ENCODE measurements at regions of chr9 and their contacts with region 1.

Region 1: DNA sequence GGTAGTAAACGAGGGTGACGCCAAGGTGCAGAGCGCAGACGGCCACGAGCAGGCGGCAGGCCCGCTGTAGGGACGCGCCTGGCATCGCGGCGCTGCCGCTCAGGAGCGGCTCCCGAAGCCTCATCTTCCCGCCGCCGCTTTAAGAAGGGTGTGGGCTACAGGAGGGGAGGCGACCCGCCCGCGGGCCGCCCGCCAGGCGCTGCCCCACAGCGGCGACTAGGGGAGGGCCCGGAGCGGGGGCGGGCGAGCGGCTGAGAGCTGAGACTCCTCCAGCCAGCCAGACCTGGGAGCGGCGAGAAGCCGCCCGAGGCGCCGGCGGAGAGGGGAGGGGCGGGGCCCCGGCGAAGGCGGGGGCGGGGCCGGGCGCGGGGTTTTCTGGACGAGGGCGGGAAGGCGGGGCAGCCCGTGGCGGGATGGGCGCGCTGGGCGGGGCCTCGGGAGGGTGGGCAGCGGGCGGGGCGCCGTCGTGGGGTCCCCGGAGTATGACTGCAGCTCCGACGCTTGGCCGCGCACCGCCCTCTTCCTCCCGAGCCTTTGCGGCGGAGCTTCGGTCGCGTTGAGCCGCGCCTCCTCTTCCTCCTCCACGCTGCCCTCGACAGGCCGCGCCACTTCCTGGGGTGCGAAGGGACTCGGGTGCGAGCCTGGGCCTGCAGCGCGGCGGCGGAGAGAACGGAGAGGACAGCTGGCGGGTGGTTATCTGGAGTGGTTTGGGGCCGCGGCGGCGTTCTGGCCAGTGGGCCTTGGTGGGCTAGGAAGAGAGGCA is at the start of gene B4GALT1:
- DNase-seq: peak; percentile 90 to 94 (median 91)
- H3K4me3 ChIP-seq: peak within 1 kb of the TSS; percentile 56 to 99
- H3K4me3 Mint-ChIP-seq: peak within 1 kb of the TSS; percentile 90 to 95 (median 92)
- H3K27ac ChIP-seq: peak within 1 kb of the TSS; percentile 93
- H3K27ac Mint-ChIP-seq: peak within 1 kb of the TSS; percentile 97 to 99 (median 99)
- H3K4me1 ChIP-seq: peaks cover 48% of the 10 kb centered on the region
- H3K4me1 Mint-ChIP-seq: peaks cover 43 to 59% (median 55%) of the 10 kb centered on the region in 4 donors
- H3K27me3 ChIP-seq: no peaks in the 10 kb centered on the region
- H3K27me3 Mint-ChIP-seq: no peaks in the 10 kb centered on the region
- total RNA-seq, gene B4GALT1: 54.1 to 56.0 TPM

Region 2: GRCh38 chr9:33024966-33025571 is 142.2 kb before region 1 on chr9 and contains the start of gene DNAJA1:
- CTCF ChIA-PET with region 1: no interaction called
- POLR2A ChIA-PET with region 1: interaction called, 28 read pairs
- intact Hi-C with region 1: loop called (anchors 1 kb)
- DNase-seq: peak; percentile 92 to 98 (median 97)
- H3K4me3 ChIP-seq: peak within 1 kb of the TSS; percentile 96 to 100
- H3K4me3 Mint-ChIP-seq: peak within 1 kb of the TSS; percentile 92 to 99 (median 96)
- H3K27ac ChIP-seq: peak within 1 kb of the TSS; percentile 100
- H3K27ac Mint-ChIP-seq: peak within 1 kb of the TSS; percentile 94 to 98 (median 97)
- H3K4me1 ChIP-seq: peaks cover 63% of the 10 kb centered on the region
- H3K4me1 Mint-ChIP-seq: peaks cover 41 to 82% (median 66%) of the 10 kb centered on the region in 4 donors
- H3K27me3 ChIP-seq: no peaks in the 10 kb centered on the region
- H3K27me3 Mint-ChIP-seq: no peaks in the 10 kb centered on the region
- total RNA-seq, gene DNAJA1: 79.8 to 84.4 TPM

Region 3: DNA sequence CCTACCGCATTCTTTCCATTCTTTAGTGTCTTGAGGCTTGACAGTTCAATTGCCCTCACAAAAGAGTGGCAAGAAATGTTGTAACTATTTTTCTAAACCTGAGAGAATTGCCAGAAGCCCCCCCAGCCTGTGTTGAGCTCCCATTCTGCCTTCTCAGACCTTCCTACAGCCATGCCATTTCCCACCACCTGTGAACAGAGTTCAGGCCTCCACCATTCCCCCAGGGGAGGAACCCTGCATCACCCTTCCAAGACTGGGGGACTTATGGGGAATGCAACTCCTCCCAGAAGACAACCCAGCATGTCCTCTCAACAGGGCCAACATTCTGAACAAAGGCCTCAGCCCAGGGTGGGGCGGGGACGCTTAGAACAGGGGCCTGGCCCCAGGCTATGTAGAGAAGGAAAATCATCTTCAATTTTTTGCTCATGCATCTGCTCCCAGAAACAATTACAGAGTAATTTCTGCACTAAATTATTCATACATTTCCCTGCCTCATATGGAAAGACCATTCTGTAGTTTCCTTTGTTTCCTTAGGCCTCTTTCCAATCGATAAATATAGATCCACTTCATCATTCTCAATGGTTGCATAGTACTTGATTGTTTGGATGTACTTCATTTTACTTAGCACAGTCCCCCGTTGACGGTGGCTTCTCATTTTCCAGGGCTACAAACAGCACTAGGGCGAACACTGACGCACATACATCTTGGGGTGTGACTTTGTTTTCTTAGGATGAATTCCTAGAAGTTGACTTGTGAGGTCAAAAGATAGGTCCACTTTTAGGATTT is 63.7 kb before region 1 on chr9:
- CTCF ChIA-PET with region 1: interaction called, 18 read pairs
- POLR2A ChIA-PET with region 1: interaction called, 4 read pairs
- intact Hi-C with region 1: no loop called
- DNase-seq: no peak
- H3K4me3 ChIP-seq: no peak overlapping the region
- H3K4me3 Mint-ChIP-seq: no peak overlapping the region
- H3K27ac ChIP-seq: no peak overlapping the region
- H3K27ac Mint-ChIP-seq: peak overlapping the region in 3 of 7 donors; percentile 3 to 26 (median 19)
- H3K4me1 ChIP-seq: no peaks in the 10 kb centered on the region
- H3K4me1 Mint-ChIP-seq: peaks cover 0 to 4% (median under 1%) of the 10 kb centered on the region in 4 donors
- H3K27me3 ChIP-seq: no peaks in the 10 kb centered on the region
- H3K27me3 Mint-ChIP-seq: no peaks in the 10 kb centered on the region

Region 4: GRCh38 chr9:33139421-33140228 is 27.6 kb before region 1 on chr9:
- CTCF ChIA-PET with region 1: interaction called, 11 read pairs
- POLR2A ChIA-PET with region 1: interaction called, 376 read pairs
- intact Hi-C with region 1: loop called (anchors 1 kb)
- DNase-seq: no peak
- H3K4me3 ChIP-seq: no peak overlapping the region
- H3K4me3 Mint-ChIP-seq: peak overlapping the region in 7 of 8 donors; percentile 36 to 88 (median 75)
- H3K27ac ChIP-seq: no peak overlapping the region
- H3K27ac Mint-ChIP-seq: peak overlapping the region; percentile 37 to 96 (median 89)
- H3K4me1 ChIP-seq: peaks cover 95% of the 10 kb centered on the region
- H3K4me1 Mint-ChIP-seq: peaks cover 70 to 98% (median 86%) of the 10 kb centered on the region in 4 donors
- H3K27me3 ChIP-seq: no peaks in the 10 kb centered on the region
- H3K27me3 Mint-ChIP-seq: no peaks in the 10 kb centered on the region

Region 5: GRCh38 chr9:33225319-33226149 is 58.3 kb after region 1 on chr9:
- CTCF ChIA-PET with region 1: interaction called, 25 read pairs
- POLR2A ChIA-PET with region 1: interaction called, 5 read pairs
- intact Hi-C with region 1: loop called (anchors 2 kb)
- DNase-seq: peak; percentile 63 to 74 (median 69)
- H3K4me3 ChIP-seq: no peak overlapping the region
- H3K4me3 Mint-ChIP-seq: peak overlapping the region in 1 of 8 donors; percentile 16
- H3K27ac ChIP-seq: no peak overlapping the region
- H3K27ac Mint-ChIP-seq: no peak overlapping the region
- H3K4me1 ChIP-seq: peaks cover 9% of the 10 kb centered on the region
- H3K4me1 Mint-ChIP-seq: peaks cover 7 to 12% (median 8%) of the 10 kb centered on the region in 4 donors
- H3K27me3 ChIP-seq: no peaks in the 10 kb centered on the region
- H3K27me3 Mint-ChIP-seq: no peaks in the 10 kb centered on the region

Region 6: DNA sequence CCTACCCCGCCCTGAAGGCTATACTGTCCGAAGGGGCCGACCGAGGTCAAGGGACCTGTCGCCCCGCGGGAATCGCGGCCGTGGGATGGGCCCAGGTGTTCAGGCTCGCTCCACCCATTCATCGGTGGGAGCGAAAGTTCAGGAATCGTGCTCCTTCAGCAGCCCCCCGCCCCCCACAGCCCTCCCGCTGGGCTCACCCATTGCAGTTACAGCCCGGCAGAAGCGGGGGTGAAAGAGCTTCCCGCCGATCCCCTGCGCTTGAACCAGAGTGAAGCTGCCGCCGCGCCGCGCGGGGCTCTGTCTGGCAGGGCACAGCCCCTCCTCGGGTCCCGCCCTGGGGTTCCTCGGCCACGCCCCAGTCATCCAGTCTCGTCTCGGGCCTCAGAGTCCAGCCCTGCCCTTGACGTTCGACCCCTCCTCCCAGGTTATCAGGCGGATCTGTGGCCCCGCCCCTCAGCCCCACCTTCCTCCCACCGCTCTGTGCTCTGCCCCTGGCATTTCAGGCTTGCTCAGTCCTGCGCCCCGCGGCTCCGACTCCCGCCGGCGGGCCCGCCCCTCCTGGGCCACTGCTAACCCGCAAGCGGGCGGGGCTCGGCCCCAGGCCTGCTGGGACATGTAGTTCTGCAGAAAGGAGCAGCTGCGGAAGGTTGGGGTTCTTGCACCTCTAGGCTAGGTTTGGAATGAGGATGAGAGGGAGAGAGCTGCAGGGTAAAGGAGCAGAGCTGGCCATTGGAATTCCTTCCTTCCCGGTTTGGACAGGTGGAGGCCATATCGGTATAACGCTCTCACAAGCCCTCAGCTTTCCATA is 1209.6 kb after region 1 on chr9 and contains the start of gene MYORG:
- CTCF ChIA-PET with region 1: no interaction called
- POLR2A ChIA-PET with region 1: no interaction called
- intact Hi-C with region 1: loop called (anchors 5 kb)
- DNase-seq: peak; percentile 94 to 98 (median 96)
- H3K4me3 ChIP-seq: peak within 1 kb of the TSS; percentile 70 to 77
- H3K4me3 Mint-ChIP-seq: peak within 1 kb of the TSS; percentile 92 to 98 (median 94)
- H3K27ac ChIP-seq: peak within 1 kb of the TSS; percentile 49
- H3K27ac Mint-ChIP-seq: peak within 1 kb of the TSS; percentile 58 to 97 (median 93)
- H3K4me1 ChIP-seq: peaks cover 39% of the 10 kb centered on the region
- H3K4me1 Mint-ChIP-seq: peaks cover 33 to 54% (median 44%) of the 10 kb centered on the region in 4 donors
- H3K27me3 ChIP-seq: no peaks in the 10 kb centered on the region
- H3K27me3 Mint-ChIP-seq: no peaks in the 10 kb centered on the region
- total RNA-seq, gene MYORG: 1.3 to 1.4 TPM

Measured in CD4-positive, alpha-beta memory T cell (primary cell).